H1 (cell line): ENCODE measurements at regions of chr9 and their contacts with region 1.

Region 1: DNA sequence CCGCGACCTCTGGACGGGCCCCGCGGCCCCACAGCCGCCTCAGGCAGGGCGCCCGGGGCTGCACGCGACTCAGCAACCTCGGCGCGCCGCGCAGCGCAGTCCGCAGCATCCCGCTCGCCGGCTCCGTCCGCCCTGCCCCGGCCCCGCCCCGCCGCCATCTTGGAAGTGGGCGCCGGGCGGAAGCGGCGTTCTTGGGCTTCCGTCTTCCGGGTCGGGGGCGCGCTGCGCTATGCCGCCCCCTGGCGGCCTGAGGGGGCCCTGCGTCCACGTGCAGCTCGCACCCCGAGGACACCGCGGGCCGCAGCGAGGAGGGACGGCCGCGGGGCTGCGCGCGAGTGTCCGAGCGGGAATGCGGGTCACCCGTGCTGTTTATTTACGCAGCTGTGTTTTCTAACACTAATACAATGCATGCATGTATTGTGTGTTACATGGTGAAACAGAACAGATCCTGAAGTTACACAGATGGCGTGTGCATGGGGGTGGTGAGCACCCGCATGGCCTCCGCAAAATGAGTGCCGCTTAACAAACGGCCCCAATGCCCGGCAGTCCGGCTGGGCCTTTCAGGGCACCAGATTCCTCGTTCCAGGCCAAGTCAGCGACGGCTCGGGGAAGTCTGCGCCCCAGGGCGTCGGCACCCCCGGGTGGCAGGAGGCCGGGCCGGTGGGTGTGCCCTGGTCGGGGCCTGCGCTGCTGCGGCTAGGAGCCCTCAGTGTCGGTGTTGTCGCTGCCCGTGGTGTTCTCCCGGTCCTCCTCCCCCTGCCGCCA is at the start of gene DNLZ:
- DNase-seq: peak in 1 of 2 experiments; percentile 92
- H3K4me3 ChIP-seq: peak within 1 kb of the TSS; percentile 71 to 97 (median 80)
- H3K27ac ChIP-seq: peak within 1 kb of the TSS; percentile 75; the same call in 1 of the 2 replicates
- H3K4me1 ChIP-seq: peaks cover 0 to 8% (median under 1%) of the 10 kb centered on the region in 4 experiments; a peak in 3 of 7 replicates
- H3K27me3 ChIP-seq: peaks cover 0 to 2% (median 0%) of the 10 kb centered on the region in 4 experiments; a peak in 2 of 7 replicates
- CTCF ChIP-seq: peak in 2 of 3 experiments; percentile 87 to 95; a peak in 3 of 4 replicates
- EP300 ChIP-seq: peak in 1 of 2 experiments; percentile 58; a peak in 1 of 3 replicates
- POLR2A ChIP-seq: peak in 1 of 2 experiments; percentile 46; a peak in 1 of 3 replicates
- RAD21 ChIP-seq: peak; percentile 45 to 68
- total RNA-seq, gene DNLZ: 17.9 and 19.0 TPM in 2 replicates

Region 2: GRCh38 chr9:136312436-136312835 is 51.4 kb before region 1 on chr9:
- CTCF ChIA-PET with region 1: interaction called, 27 read pairs
- POLR2A ChIA-PET with region 1: interaction called, 5 read pairs
- DNase-seq: no peak
- H3K4me3 ChIP-seq: no peak overlapping the region
- H3K27ac ChIP-seq: no peak overlapping the region
- H3K4me1 ChIP-seq: 0 out of 7 replicates have a peak, but pooled peaks cover 0 to 3% (median 0%) of the 10 kb centered on the region in 4 experiments
- H3K27me3 ChIP-seq: no peaks in the 10 kb centered on the region; a peak in 1 of 7 replicates
- CTCF ChIP-seq: peak in 2 of 3 experiments; percentile 59 to 79; a peak in 3 of 4 replicates
- EP300 ChIP-seq: no peak
- POLR2A ChIP-seq: no peak
- RAD21 ChIP-seq: peak; percentile 77 to 83

Region 3: DNA sequence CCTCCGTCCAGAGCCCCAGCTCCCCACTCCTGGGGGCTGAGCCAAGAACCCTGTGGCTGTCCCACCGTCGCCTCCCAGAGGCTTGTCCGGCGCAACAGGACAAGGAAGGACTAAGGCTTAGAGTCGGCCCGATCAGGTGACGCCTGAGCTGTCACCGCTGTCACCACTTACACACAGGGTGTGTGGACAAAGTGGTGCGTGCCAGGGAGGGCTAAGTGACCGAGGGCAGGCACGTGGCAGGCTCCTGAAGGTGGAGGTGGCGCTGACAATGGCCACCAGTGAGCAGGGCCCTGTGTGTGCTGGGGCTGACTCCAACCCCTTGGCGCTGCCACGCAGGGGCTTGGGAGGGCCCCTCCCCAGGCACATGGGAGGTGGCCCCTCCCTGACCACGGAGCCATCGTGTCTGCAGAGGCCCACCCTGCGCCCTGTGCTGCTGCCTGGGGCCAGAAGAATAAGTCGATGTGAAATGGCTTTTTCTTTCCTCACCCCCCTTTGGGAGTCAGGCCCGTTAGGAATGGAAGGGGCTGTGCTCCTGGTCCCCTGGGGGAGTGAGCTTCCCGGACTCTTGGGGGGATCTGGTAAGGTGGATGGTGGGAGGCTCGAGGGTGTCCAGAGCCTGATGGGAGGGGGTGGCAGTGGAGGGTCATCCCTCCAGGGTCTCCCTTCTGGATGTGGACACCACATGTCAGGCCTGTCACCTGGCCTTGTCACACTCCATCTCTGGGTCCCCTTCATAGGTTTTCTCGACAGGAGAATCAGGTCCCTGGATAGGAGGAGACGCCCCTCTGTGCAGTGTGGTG is 39.1 kb before region 1 on chr9:
- CTCF ChIA-PET with region 1: interaction called, 12 read pairs
- POLR2A ChIA-PET with region 1: interaction called, 7 read pairs
- DNase-seq: no peak
- H3K4me3 ChIP-seq: no peak overlapping the region
- H3K27ac ChIP-seq: no peak overlapping the region
- H3K4me1 ChIP-seq: peaks cover 0 to 24% (median 20%) of the 10 kb centered on the region in 4 experiments; a peak in 6 of 7 replicates
- H3K27me3 ChIP-seq: no peaks in the 10 kb centered on the region
- CTCF ChIP-seq: peak in 2 of 3 experiments; percentile 24 to 42; a peak in 2 of 4 replicates
- EP300 ChIP-seq: no peak
- POLR2A ChIP-seq: no peak
- RAD21 ChIP-seq: peak; percentile 18 to 40; a peak in 2 of 4 replicates

Region 4: DNA sequence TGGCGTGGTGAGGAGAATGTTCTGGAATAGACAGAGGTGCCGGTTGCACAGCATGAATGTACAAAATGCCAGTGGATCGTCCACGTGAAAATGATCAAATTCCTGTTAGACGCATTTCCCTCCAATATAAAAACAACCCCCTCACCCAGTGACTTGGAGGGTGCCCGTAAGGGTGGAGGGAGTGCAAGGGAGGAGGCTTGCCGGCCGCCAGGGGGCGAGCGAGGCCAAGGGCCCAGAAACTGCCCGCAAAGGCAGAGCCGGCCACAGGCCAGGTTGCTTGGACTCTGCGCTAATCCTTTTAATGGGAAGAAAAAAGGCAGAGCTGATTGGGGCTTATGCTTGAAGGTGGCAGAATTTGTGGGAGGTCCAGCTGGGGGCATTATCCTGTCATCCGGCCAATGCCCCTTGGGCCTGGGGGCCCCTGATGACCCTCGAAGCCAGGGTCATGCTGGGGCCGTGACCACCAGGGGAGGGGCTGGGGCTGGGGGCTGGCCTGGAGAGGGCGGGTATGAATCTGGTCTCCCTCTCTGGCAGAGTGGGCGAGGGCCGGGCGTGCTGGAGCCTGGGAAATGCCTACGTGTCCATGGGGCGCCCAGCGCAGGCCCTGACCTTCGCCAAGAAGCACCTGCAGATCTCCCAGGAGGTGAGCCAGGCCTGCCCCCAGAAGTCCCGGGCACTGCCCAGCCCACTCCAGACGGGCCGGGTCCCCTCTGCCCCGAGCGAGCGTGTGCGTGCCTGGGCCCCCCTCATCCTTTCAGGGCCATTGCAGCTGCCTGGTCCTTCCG is 24.4 kb before region 1 on chr9:
- CTCF ChIA-PET with region 1: interaction called, 80 read pairs
- POLR2A ChIA-PET with region 1: interaction called, 137 read pairs
- DNase-seq: peak in 1 of 2 experiments; percentile 89
- H3K4me3 ChIP-seq: no peak overlapping the region
- H3K27ac ChIP-seq: no peak overlapping the region
- H3K4me1 ChIP-seq: peaks cover 0 to 9% (median 8%) of the 10 kb centered on the region in 4 experiments; a peak in 6 of 7 replicates
- H3K27me3 ChIP-seq: no peaks in the 10 kb centered on the region
- CTCF ChIP-seq: peak in 2 of 3 experiments; percentile 93 to 96; a peak in 3 of 4 replicates
- EP300 ChIP-seq: no peak
- POLR2A ChIP-seq: no peak
- RAD21 ChIP-seq: peak; percentile 76 to 82

Region 5: GRCh38 chr9:136385015-136385414 is 21.2 kb after region 1 on chr9:
- CTCF ChIA-PET with region 1: interaction called, 10 read pairs
- POLR2A ChIA-PET with region 1: interaction called, 10 read pairs
- DNase-seq: no peak
- H3K4me3 ChIP-seq: no peak overlapping the region
- H3K27ac ChIP-seq: no peak overlapping the region
- H3K4me1 ChIP-seq: no peaks in the 10 kb centered on the region
- H3K27me3 ChIP-seq: no peaks in the 10 kb centered on the region
- CTCF ChIP-seq: no peak
- EP300 ChIP-seq: no peak
- POLR2A ChIP-seq: no peak
- RAD21 ChIP-seq: no peak

Region 6: DNA sequence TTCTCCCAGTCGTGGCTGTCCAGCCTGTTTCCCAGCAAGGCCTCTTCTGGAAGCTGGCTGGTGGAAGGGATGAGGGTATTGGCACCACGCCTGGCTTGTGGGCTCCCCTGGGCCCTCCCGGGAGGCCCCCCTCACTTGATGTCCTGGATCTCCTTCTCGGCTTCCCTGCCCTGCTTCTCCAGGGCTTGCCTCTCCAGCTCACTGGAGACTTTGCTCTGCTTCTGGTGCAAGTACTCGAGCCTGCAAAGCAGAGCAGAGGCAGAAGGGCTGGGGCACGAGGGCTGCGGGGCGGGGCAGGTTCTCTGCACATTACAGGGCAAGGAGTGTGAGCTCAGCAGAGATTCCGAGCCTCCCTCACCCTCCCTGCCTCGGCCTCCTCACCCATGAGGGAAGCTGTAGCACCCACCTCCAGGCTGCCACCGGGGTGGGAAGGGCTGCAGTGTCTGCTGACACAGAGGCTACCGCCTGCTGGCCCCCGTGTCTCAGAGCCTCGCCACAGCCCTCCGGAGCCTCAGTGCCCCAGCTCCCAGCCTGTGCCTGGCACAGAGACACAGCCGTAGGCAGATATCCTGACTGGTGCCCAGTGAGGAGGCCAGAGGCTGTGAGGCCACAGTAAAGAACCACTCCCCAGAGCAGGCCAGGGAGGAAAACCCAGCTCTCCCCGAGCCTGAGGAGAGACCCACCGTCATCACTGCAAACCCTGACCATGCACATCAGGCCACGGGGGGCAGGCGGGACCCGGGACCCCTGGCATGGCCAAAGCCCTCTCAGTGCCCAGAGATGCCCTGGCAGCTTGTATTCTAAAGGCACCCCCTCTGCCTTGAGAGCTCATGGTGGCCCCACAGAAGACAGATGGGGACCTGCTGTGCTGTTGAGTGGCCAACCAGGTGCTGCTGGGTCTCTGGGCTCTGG is 29.0 kb after region 1 on chr9:
- CTCF ChIA-PET with region 1: interaction called, 11 read pairs
- POLR2A ChIA-PET with region 1: interaction called, 72 read pairs
- DNase-seq: no peak
- H3K4me3 ChIP-seq: no peak overlapping the region
- H3K27ac ChIP-seq: no peak overlapping the region
- H3K4me1 ChIP-seq: no peaks in the 10 kb centered on the region
- H3K27me3 ChIP-seq: no peaks in the 10 kb centered on the region
- CTCF ChIP-seq: no peak
- EP300 ChIP-seq: no peak
- POLR2A ChIP-seq: no peak
- RAD21 ChIP-seq: no peak